ENCODE measurements at regions of chr1 and their contacts with region 1.

Region 1: DNA sequence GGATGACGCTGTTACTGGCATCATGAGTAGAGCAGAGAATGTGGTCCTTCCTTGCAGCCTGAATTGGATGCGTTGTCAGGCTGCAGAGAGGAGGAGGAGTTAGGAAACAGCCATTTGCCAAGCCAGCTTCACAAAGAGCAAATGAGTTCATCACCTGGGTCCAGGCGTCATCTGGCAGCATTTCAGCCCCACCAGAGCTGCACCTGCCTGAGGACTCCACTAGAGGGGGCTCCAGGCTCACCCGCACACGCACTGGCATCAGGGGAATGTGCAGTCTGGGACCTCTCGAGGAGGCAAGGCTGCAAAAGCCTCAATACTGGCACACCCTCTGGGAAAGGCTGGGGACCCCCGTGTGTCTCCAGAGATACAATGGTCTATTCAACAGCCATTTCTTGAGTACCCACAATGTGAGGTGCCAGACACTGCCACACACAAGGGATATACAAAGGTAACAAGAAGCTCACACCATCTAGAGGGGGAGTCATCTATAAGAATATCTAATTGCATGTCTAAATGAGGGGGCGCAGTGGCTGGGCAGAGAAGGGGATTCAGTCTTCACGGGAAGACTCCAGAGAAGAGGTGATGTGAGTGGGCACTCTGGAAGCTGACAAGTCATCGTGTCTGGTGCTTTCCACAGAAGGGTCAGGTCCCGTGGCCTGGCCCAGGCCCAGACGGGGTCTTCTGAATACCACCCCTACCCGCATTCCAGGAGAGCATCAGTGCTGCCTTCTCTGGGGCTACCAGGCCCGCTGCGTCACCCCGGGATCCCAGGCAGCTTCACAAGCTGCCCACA is 53.5 kb upstream of the CNTN2 start:
- DNase-seq: peak; percentile 53
- ATAC-seq: peak; percentile 88
- H3K4me3 ChIP-seq: no peak overlapping the region
- H3K27ac ChIP-seq: no peak overlapping the region
- H3K4me1 ChIP-seq: no peaks in the 10 kb centered on the region
- H3K27me3 ChIP-seq: no peaks in the 10 kb centered on the region; the same call in 1 of the 2 replicates
- CTCF ChIP-seq: peak; percentile 98

Region 2: DNA sequence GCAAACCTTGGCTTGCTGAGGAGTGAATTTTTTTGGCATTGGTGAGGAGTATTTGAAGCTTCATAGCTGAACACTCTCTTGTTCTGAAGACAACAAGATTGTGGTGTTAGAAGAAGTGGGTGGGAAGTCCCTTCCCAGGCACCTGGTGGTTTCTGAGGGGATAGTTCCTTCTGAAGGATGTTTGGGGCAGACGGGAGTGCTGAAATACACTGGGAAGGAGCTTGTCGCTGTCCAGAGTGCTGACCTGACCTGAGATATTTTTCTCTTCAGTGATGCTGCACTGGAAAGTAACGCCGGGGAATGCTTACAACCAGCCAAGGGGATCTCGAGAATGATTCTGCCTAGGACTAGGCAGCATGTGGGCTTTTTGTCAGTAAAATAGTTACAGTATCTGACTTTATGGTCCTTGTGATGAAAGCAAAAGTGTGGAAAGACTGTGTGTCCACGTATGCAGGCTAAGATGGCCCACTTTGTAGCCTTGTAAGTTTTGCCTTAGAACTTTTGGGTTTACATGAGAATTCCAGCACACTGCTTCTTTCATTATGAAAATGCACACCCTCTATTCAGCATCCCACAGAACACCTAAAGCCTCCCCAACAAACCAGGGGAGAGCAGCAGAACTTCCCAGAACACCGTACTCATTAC is 151.9 kb before region 1 on chr1:
- CTCF ChIA-PET with region 1: no interaction called
- POLR2A ChIA-PET with region 1: no interaction called
- in situ Hi-C with region 1: no loop called
- intact Hi-C with region 1: no loop called
- DNase-seq: no peak
- ATAC-seq: no peak; the same call in 1 of the 2 replicates
- H3K4me3 ChIP-seq: no peak overlapping the region
- H3K27ac ChIP-seq: no peak overlapping the region
- H3K4me1 ChIP-seq: no peaks in the 10 kb centered on the region
- H3K27me3 ChIP-seq: no peaks in the 10 kb centered on the region
- CTCF ChIP-seq: no peak

Region 3: DNA sequence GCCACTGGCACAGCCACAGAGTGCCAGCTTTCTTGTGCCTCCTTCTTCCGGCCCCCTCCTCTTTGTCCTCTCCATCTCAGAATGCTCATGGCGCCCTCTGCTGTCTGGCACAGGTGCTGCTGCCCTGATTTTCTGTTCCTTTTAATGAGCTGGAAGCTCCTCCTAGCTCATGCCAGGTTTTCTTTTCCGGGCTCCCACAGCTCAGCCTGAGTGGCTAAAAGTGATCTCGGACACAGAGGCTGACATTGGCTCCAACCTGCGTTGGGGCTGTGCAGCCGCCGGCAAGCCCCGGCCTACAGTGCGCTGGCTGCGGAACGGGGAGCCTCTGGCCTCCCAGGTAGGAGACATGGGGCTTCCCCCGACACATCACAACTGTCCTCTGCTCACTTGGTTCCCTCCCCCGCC is 72.2 kb after region 1 on chr1:
- CTCF ChIA-PET with region 1: interaction called, 78 read pairs
- POLR2A ChIA-PET with region 1: no interaction called
- in situ Hi-C with region 1: no loop called
- intact Hi-C with region 1: loop called (anchors 1 kb)
- DNase-seq: peak; percentile 36
- ATAC-seq: peak; percentile 76
- H3K4me3 ChIP-seq: no peak overlapping the region
- H3K27ac ChIP-seq: no peak overlapping the region
- H3K4me1 ChIP-seq: no peaks in the 10 kb centered on the region; the same call in 1 of the 2 replicates
- H3K27me3 ChIP-seq: no peaks in the 10 kb centered on the region
- CTCF ChIP-seq: peak; percentile 94

Region 4: GRCh38 chr1:205071028-205071409 is 81.6 kb after region 1 on chr1:
- CTCF ChIA-PET with region 1: interaction called, 12 read pairs
- POLR2A ChIA-PET with region 1: no interaction called
- in situ Hi-C with region 1: no loop called
- intact Hi-C with region 1: no loop called
- DNase-seq: no peak
- ATAC-seq: no peak
- H3K4me3 ChIP-seq: no peak overlapping the region
- H3K27ac ChIP-seq: no peak overlapping the region
- H3K4me1 ChIP-seq: no peaks in the 10 kb centered on the region; the same call in 1 of the 2 replicates
- H3K27me3 ChIP-seq: no peaks in the 10 kb centered on the region
- CTCF ChIP-seq: no peak

Region 5: DNA sequence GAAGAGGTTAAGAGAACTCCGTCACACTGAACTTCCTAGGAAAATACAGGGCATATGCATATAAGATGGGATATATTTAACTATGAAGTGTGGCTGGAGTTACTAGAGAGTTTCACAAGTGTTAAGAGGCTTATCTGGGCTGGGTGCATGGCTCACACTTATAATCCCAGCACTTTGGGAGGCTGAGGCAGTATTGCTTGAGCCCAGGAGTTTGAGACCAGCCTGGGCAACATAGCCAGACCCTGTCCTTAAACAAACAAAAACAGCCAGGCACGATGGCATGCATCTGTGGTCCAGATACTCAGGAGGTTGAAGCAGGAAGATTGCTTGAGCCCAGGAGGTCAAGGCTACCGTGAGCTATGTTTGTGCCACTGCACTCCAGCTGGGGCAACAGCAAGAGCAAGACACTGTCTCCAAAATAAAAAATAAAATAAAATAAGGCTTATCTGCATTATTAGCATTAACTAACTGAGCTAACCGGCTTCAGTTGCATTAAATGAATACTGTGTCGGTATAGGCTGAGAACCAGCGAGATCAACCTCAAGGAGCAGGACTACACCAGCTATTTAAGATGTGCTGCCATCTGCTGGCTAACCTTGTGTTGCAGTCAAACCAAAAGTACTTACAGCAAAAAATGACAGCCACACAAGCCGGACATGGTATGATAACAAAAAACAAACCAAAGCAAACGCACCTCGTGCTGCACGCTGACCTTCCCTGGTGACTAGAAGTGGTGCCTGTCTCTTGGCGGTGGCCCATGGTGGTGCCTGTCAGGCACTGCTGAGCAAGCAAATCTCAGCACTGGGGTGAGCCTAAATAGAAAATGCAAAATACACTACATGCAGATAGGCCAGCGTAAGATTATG is 152.0 kb after region 1 on chr1:
- CTCF ChIA-PET with region 1: no interaction called
- POLR2A ChIA-PET with region 1: no interaction called
- in situ Hi-C with region 1: no loop called
- intact Hi-C with region 1: loop called (anchors 5 kb)
- DNase-seq: peak; percentile 55
- ATAC-seq: peak; percentile 88
- H3K4me3 ChIP-seq: no peak overlapping the region
- H3K27ac ChIP-seq: no peak overlapping the region
- H3K4me1 ChIP-seq: 0 out of 2 replicates have a peak, but pooled peaks cover 3% of the 10 kb centered on the region
- H3K27me3 ChIP-seq: no peaks in the 10 kb centered on the region
- CTCF ChIP-seq: peak; percentile 92